ENCODE measurements at regions of chr2 and their contacts with region 1.

Region 1: DNA sequence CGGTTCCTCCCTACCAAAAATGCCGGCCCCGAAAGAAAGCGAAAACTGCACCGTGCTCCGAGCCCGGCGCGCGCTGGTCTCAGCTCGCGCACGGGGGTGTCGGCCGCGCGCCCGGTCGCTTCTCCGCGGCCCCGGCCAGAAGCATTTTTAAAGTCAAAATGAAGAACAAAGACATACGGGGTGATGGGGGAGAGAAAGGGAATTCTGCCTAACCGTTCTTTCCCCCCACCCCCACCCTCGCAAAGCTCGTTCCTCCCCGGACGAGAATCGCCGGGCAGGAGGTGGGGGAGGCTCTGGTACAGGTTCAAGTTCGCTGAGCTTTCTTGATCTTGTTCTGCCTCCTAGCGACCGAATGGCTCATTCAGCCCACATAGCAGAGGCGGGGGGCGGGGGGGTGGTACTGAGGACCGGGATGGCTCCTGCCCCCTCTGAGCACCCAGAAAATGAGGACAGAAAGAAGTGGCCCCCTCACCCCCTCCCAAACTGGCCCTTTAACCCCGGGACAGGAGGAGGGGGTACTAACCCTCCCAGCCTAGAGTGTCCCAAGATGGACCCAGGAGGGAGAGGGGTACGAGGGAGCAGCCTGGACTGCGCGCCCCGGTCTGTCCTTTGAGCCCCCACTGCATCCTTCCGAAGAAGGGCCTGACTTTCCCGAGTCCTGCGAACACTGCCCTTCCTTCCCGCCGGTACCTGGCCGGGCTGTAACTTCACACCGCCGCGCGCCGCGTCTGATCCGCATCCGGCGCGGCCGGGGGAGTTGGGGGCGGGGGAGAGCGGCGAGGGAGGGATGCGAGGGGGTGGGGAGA is 3.1 kb downstream of the BCL11A start:
- DNase-seq: peak; percentile 87
- H3K4me3 ChIP-seq: peak overlapping the region; percentile 47 to 75 (median 62)
- H3K27ac ChIP-seq: peak overlapping the region; percentile 84 to 88 (median 88)
- H3K4me1 ChIP-seq: peaks cover 9 to 62% (median 34%) of the 10 kb centered on the region in 4 donors
- H3K27me3 ChIP-seq: peaks cover 41% of the 10 kb centered on the region
- CTCF ChIP-seq: peak; percentile 43 to 78 (median 60)
- EP300 ChIP-seq: no peak
- POLR2A ChIP-seq: no peak

Region 2: DNA sequence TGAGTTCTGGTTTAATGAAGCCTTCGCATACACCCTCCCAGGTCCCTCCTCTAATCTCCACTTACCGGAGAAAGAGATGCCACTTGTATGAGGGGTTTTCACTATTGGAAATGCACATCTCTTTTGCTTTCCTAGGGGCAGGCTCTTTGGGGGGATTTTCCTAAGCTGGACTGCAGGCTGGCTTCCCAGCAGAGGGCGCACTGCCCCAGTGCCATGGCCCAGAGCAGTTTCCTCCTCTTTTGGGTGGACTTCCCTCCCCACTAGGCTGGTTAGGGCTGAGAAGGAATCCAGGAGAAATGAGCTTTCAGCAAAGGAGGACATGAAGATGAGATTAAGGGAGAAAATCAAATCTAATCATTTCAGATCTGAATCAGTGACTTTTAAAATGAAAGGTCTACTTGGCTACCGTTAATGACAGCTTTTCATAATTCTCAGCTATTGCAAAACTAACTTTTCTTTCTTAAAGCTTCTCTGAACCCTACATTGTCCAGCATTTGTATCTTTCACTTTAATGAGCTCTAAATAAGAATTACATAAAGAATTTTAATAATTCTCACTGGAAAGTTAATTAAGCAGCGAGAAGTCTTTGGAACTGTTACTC is 1525.1 kb before region 1 on chr2:
- in situ Hi-C with region 1: loop called in 1 of 4 experiments (anchors 25 kb)
- intact Hi-C with region 1: loop called (anchors 10 kb)
- DNase-seq: peak; percentile 16
- H3K4me3 ChIP-seq: no peak overlapping the region
- H3K27ac ChIP-seq: no peak overlapping the region
- H3K4me1 ChIP-seq: no peaks in the 10 kb centered on the region
- H3K27me3 ChIP-seq: no peaks in the 10 kb centered on the region
- CTCF ChIP-seq: peak; percentile 39 to 60 (median 53)
- EP300 ChIP-seq: no peak
- POLR2A ChIP-seq: no peak

Region 3: GRCh38 chr2:59034837-59035236 is 1515.5 kb before region 1 on chr2:
- in situ Hi-C with region 1: loop called in 1 of 4 experiments (anchors 25 kb)
- intact Hi-C with region 1: loop called (anchors 10 kb)
- DNase-seq: no peak
- H3K4me3 ChIP-seq: no peak overlapping the region
- H3K27ac ChIP-seq: peak overlapping the region in 2 of 4 donors; percentile 22 to 32
- H3K4me1 ChIP-seq: no peaks in the 10 kb centered on the region
- H3K27me3 ChIP-seq: no peaks in the 10 kb centered on the region
- CTCF ChIP-seq: no peak
- EP300 ChIP-seq: no peak
- POLR2A ChIP-seq: no peak

Region 4: GRCh38 chr2:59301466-59302402 is 1248.6 kb before region 1 on chr2:
- in situ Hi-C with region 1: loop called in 1 of 4 experiments (anchors 25 kb)
- intact Hi-C with region 1: loop called (anchors 10 kb)
- DNase-seq: peak; percentile 21
- H3K4me3 ChIP-seq: no peak overlapping the region
- H3K27ac ChIP-seq: no peak overlapping the region
- H3K4me1 ChIP-seq: peaks cover 0 to 6% (median 0%) of the 10 kb centered on the region in 4 donors
- H3K27me3 ChIP-seq: peaks cover 4% of the 10 kb centered on the region
- CTCF ChIP-seq: peak; percentile 49 to 60 (median 58)
- EP300 ChIP-seq: no peak
- POLR2A ChIP-seq: no peak

Region 5: DNA sequence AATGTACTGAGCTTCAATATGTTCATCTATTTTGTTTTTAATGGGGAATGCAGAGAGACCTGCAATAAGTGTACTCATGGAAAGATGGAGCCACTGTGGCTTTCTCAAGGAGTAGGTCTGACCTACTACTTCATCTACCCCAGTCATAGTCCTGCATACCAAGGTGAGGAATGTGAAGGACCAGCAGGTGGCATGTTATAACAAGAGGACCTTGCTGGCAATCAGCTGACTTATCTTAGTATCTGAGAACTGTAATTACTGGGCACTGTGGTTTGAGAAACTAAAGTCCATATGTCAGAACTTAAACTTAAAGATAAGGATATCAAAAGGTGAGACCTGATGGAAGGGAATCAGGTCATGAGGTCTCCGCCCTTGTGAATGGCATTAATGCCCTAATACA is 1101.1 kb before region 1 on chr2:
- in situ Hi-C with region 1: loop called in 1 of 4 experiments (anchors 25 kb)
- intact Hi-C with region 1: no loop called
- DNase-seq: peak; percentile 29
- H3K4me3 ChIP-seq: no peak overlapping the region
- H3K27ac ChIP-seq: no peak overlapping the region
- H3K4me1 ChIP-seq: no peaks in the 10 kb centered on the region
- H3K27me3 ChIP-seq: no peaks in the 10 kb centered on the region
- CTCF ChIP-seq: peak in 4 of 5 experiments; percentile 21 to 50 (median 32)
- EP300 ChIP-seq: no peak
- POLR2A ChIP-seq: no peak